ENCODE measurements at regions of chr16 and their contacts with region 1.

Region 1: GRCh38 chr16:72129976-72130865 is 36.6 kb downstream of the DHX38 start:
- DNase-seq: no peak
- ATAC-seq: no peak
- H3K4me3 Mint-ChIP-seq: no peak overlapping the region
- H3K27ac Mint-ChIP-seq: no peak overlapping the region
- H3K4me1 Mint-ChIP-seq: no peaks in the 10 kb centered on the region
- H3K27me3 Mint-ChIP-seq: no peaks in the 10 kb centered on the region
- CTCF ChIP-seq: no peak

Region 2: DNA sequence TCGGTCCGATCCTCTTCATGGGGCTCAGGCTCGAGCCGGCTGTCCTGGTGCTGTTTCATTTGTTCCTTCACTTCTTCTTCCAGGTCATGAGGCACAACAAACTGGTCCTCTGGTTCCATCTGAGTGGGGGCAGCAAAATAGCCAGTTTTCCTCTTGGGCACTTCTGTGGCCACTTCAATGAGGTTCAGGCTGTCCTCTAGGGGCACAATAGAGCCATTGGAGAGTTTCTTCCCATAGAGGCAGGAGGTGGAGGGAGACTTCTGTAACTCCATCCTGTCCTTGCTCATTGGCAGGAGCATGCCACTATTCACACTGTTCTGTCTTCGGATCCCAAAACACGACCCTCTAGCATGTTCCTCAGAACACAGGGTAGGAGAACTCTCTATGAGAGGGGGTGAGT is 481.3 kb before region 1 on chr16:
- CTCF ChIA-PET with region 1: no interaction called
- POLR2A ChIA-PET with region 1: no interaction called
- intact Hi-C with region 1: no loop called
- DNase-seq: no peak
- ATAC-seq: no peak
- H3K4me3 Mint-ChIP-seq: no peak overlapping the region
- H3K27ac Mint-ChIP-seq: no peak overlapping the region
- H3K4me1 Mint-ChIP-seq: no peaks in the 10 kb centered on the region
- H3K27me3 Mint-ChIP-seq: no peaks in the 10 kb centered on the region
- CTCF ChIP-seq: no peak

Region 3: DNA sequence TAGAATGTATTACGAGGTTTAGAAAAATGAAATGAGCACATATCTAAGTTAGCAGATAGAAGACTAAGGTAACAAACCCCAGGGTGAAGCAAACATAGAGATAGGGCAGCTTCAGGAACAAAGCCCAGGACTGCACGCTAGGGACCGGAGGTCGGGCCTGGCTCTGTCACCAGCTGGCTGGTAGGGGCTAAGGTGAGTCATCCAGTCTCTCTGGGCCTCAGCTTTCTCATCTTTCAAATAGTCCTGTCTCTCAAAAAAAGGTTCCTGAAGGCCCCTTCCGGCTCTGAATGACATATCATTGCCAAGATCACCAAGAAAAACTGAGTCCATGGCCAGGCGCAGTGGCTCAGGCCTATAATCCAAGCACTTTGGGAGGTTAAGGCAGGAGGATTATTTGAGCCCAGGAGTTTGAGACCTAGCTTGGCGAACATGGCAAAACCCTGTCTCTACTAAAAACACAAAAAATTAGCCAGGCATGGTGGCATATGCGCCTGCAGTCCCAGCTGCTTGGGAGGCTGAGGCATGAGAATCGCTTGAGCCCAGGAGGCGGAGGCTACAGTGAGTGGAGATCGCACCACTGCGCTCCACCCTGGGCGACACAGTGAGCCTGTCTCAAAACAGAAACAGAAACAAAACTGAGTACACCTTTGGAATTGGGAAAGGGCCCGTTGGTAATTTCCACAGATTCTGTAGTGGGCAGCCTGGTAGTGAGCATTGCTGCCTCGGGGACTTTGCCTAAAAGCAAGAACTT is 156.0 kb before region 1 on chr16:
- CTCF ChIA-PET with region 1: no interaction called
- POLR2A ChIA-PET with region 1: no interaction called
- intact Hi-C with region 1: no loop called
- DNase-seq: no peak
- ATAC-seq: no peak
- H3K4me3 Mint-ChIP-seq: no peak overlapping the region
- H3K27ac Mint-ChIP-seq: no peak overlapping the region
- H3K4me1 Mint-ChIP-seq: no peaks in the 10 kb centered on the region
- H3K27me3 Mint-ChIP-seq: peaks cover 4% of the 10 kb centered on the region
- CTCF ChIP-seq: no peak

Region 4: GRCh38 chr16:72072514-72073342 is 57.5 kb before region 1 on chr16:
- CTCF ChIA-PET with region 1: no interaction called
- POLR2A ChIA-PET with region 1: no interaction called
- intact Hi-C with region 1: no loop called
- DNase-seq: no peak
- ATAC-seq: no peak
- H3K4me3 Mint-ChIP-seq: no peak overlapping the region
- H3K27ac Mint-ChIP-seq: no peak overlapping the region
- H3K4me1 Mint-ChIP-seq: no peaks in the 10 kb centered on the region
- H3K27me3 Mint-ChIP-seq: no peaks in the 10 kb centered on the region
- CTCF ChIP-seq: no peak

Region 5: GRCh38 chr16:72111657-72112451 is 18.4 kb before region 1 on chr16:
- CTCF ChIA-PET with region 1: no interaction called
- POLR2A ChIA-PET with region 1: no interaction called
- intact Hi-C with region 1: no loop called
- DNase-seq: no peak
- ATAC-seq: no peak
- H3K4me3 Mint-ChIP-seq: no peak overlapping the region
- H3K27ac Mint-ChIP-seq: no peak overlapping the region
- H3K4me1 Mint-ChIP-seq: no peaks in the 10 kb centered on the region
- H3K27me3 Mint-ChIP-seq: no peaks in the 10 kb centered on the region
- CTCF ChIP-seq: no peak

Region 6: GRCh38 chr16:72467157-72467759 is 337.0 kb after region 1 on chr16:
- CTCF ChIA-PET with region 1: interaction called, 43 read pairs
- POLR2A ChIA-PET with region 1: no interaction called
- intact Hi-C with region 1: no loop called
- DNase-seq: no peak
- ATAC-seq: no peak
- H3K4me3 Mint-ChIP-seq: no peak overlapping the region
- H3K27ac Mint-ChIP-seq: no peak overlapping the region
- H3K4me1 Mint-ChIP-seq: peaks cover 17% of the 10 kb centered on the region
- H3K27me3 Mint-ChIP-seq: no peaks in the 10 kb centered on the region
- CTCF ChIP-seq: no peak